Mammary epithelial cell (primary cell): ENCODE measurements at regions of chr1 and their contacts with region 1.

Region 1: DNA sequence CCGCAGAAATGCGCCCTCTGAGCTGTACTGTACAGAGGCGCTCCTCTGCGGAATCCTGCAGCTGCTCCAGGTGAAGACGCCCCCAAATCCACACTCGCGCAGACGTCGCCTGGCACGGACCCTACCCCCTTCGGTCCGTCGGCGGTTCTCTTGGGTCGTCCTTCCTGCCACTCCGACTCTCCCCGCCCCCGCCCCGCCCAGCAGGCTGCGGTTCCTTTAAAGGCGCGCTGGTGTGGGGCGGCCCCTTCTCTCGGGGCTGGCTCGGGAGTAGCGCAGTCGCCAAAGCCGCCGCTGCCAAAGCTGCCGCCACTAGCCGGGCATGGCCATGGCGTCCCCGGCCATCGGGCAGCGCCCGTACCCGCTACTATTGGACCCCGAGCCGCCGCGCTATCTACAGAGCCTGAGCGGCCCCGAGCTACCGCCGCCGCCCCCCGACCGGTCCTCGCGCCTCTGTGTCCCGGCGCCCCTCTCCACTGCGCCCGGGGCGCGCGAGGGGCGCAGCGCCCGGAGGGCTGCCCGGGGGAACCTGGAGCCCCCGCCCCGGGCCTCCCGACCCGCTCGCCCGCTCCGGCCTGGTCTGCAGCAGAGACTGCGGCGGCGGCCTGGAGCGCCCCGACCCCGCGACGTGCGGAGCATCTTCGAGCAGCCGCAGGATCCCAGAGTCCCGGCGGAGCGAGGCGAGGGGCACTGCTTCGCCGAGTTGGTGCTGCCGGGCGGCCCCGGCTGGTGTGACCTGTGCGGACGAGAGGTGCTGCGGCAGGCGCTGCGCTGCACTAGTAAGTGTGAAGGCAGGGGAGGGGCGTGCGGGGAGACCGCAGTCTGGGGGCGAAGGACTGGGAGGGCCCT is at the start of gene RASSF5:
- DNase-seq: peak; percentile 70
- H3K4me3 ChIP-seq: peak within 1 kb of the TSS; percentile 51 to 68 (median 52)
- H3K27ac ChIP-seq: no peak within 1 kb of the TSS
- H3K4me1 ChIP-seq: peaks cover 51% of the 10 kb centered on the region
- H3K27me3 ChIP-seq: no peaks in the 10 kb centered on the region
- CTCF ChIP-seq: no peak
- total RNA-seq, gene RASSF5: 3.5 to 6.7 TPM

Region 2: GRCh38 chr1:206544562-206545257 is 37.2 kb after region 1 on chr1:
- CTCF ChIA-PET with region 1: no interaction called
- dilution Hi-C with region 1: no loop called
- in situ Hi-C with region 1: no loop called
- intact Hi-C with region 1: loop called (anchors 1 kb)
- DNase-seq: peak; percentile 31
- H3K4me3 ChIP-seq: no peak overlapping the region
- H3K27ac ChIP-seq: no peak overlapping the region
- H3K4me1 ChIP-seq: no peaks in the 10 kb centered on the region
- H3K27me3 ChIP-seq: no peaks in the 10 kb centered on the region
- CTCF ChIP-seq: peak; percentile 84 to 89

Region 3: DNA sequence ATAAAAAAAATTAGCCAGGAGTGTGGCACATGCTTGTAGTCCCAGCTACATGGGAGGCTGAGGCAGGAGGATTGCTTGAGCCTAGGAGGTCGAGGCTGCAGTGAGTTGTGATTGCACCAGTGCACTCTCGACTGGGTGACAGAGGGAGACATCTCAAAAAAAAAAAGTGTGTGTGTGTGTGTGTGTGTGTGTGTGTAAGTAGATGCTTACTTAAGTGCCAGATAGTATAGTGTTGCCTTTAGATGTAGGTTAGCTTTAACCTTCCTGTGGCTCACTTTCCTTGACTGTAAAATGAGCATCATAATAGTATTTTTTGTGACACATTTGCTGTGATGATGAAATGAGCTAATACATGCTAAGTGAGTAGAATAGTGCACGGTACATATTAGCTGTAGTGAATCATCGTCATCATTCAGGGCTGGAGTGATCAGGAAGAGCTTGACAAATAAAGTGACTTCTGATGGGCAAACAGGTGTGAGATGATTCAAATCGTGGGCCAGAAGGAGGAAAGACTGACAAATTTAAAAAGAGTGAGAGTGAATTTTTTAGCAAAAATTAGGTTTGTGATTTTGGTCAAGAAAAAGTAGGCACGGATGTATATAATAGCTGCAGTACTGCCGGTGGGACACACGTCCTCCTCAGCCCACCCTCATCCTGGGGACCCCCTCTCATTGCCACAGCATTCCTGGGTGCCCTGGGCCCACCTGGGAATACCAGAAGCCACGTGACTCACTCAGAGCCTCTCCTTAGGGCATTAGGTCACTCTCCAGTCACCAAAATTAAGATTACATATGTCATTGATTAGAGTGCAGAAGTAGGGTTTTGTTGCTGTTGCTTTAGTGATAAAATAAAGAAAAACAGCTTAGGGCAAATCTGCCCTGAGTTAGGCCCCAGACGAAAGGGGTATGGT is 70.8 kb after region 1 on chr1:
- CTCF ChIA-PET with region 1: interaction called, 6 read pairs
- dilution Hi-C with region 1: no loop called
- in situ Hi-C with region 1: no loop called
- intact Hi-C with region 1: loop called (anchors 1 kb)
- DNase-seq: no peak
- H3K4me3 ChIP-seq: no peak overlapping the region
- H3K27ac ChIP-seq: no peak overlapping the region
- H3K4me1 ChIP-seq: no peaks in the 10 kb centered on the region
- H3K27me3 ChIP-seq: no peaks in the 10 kb centered on the region
- CTCF ChIP-seq: no peak

Region 4: DNA sequence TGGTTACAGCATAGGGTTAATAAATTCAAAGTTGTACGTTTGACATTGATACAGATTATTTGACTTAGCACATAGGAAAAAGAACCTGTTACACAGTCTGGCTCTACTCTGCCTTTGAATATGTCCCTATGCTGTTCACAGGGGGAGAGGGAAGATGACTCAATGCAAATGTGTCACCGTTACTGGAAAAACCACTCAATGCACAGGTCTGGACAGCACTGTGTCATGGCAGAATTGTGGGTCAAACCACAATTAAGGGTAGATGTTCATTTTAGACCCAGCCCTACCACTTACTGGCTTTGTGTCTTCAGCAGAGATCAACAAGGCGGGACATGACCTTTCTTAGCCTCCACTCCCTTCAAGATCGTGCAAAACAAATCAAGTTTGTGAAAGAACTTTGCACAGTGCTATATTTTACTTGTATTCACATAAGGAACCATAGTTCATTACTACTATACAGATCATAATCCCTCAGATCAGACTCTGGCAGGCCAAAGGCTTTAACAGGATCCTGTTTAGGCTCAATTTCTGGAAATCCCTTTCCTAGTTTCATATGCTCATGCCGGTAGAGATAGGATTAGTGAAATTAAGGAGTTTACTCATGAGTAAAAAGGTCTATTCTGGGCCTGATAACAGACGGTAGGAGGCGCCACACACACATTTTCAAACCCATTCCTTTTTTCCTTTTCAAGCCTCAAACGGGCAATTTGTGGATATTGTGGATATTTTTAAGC is 82.7 kb after region 1 on chr1:
- CTCF ChIA-PET with region 1: no interaction called
- dilution Hi-C with region 1: no loop called
- in situ Hi-C with region 1: loop called in 1 of 2 experiments (anchors 5 kb)
- intact Hi-C with region 1: no loop called
- DNase-seq: peak; percentile 96
- H3K4me3 ChIP-seq: no peak overlapping the region
- H3K27ac ChIP-seq: peak overlapping the region; percentile 26
- H3K4me1 ChIP-seq: peaks cover 48% of the 10 kb centered on the region
- H3K27me3 ChIP-seq: no peaks in the 10 kb centered on the region
- CTCF ChIP-seq: peak; percentile 35 to 36

Region 5: GRCh38 chr1:207218512-207219362 is 711.2 kb after region 1 on chr1:
- CTCF ChIA-PET with region 1: no interaction called
- dilution Hi-C with region 1: no loop called
- in situ Hi-C with region 1: no loop called
- intact Hi-C with region 1: no loop called
- DNase-seq: peak; percentile 54
- H3K4me3 ChIP-seq: no peak overlapping the region
- H3K27ac ChIP-seq: no peak overlapping the region
- H3K4me1 ChIP-seq: peaks cover 28% of the 10 kb centered on the region
- H3K27me3 ChIP-seq: no peaks in the 10 kb centered on the region
- CTCF ChIP-seq: no peak